Heart left ventricle (tissue), 16 donors: ENCODE measurements at regions of chr3 and their contacts with region 1.

Region 1: GRCh38 chr3:69784954-69785514 is 45.8 kb downstream of the MITF start:
- DNase-seq: peak; percentile 34 to 81 (median 77)
- ATAC-seq: peak; percentile 57 to 90 (median 82)
- H3K4me3 ChIP-seq: no peak overlapping the region
- H3K27ac ChIP-seq: peak overlapping the region in 11 of 12 donors; percentile 9 to 70 (median 46)
- H3K4me1 ChIP-seq: peaks cover 0 to 65% (median 45%) of the 10 kb centered on the region in 12 donors
- H3K27me3 ChIP-seq: no peaks in the 10 kb centered on the region
- CTCF ChIP-seq: no peak
- POLR2A ChIP-seq: no peak

Region 2: DNA sequence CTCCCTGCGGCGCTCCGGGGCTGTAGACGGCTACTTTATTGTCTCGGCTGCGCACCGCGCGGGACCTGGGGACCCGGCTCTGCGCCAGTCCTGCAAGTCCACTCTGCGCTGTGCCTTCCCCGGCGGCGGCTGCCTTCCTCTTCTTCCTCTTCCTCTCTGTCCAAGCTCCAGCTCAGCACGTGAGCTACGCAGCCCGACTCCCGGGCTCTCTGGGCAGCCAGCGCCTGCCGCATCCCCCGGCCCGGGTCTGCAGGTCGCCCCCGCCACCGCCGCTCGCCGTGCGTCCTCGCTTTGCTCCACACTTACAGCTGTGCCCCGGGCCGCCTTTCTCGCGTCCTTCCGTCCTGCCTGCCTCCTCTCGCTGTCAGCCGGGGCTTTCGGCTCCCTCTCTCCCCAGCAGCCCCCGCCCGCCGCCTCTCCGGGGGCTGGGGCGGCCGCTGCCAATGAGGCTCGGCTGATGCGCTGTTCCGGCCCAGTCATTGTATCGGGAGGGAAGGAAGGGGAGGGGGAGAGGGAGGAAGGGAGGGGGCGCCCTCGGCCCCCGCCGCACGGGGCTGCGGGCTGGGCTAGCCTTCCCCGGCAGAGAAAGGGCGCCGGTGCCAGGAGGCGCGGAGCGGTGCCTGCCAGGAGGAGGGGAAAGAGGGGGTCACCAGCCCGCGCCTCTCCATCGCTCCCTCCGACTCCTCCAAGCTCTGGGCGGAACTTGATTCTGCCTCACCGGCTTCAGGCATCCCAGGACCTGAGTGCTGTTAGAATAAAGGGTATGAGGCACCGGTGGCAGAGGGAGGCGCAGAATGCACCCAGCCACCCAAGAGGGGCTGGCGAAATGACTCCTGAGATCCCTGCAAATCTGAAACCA is 242.6 kb before region 1 on chr3:
- intact Hi-C with region 1: no loop called
- DNase-seq: peak in 4 of 5 donors; percentile 20 to 70 (median 46)
- ATAC-seq: peak; percentile 12 to 77 (median 70)
- H3K4me3 ChIP-seq: peak overlapping the region; percentile 55 to 77 (median 62)
- H3K27ac ChIP-seq: peak overlapping the region in 9 of 12 donors; percentile 3 to 70 (median 47)
- H3K4me1 ChIP-seq: peaks cover 0 to 24% (median 5%) of the 10 kb centered on the region in 12 donors
- H3K27me3 ChIP-seq: peaks cover 0 to 13% (median 0%) of the 10 kb centered on the region in 9 donors
- CTCF ChIP-seq: no peak
- POLR2A ChIP-seq: no peak

Region 3: DNA sequence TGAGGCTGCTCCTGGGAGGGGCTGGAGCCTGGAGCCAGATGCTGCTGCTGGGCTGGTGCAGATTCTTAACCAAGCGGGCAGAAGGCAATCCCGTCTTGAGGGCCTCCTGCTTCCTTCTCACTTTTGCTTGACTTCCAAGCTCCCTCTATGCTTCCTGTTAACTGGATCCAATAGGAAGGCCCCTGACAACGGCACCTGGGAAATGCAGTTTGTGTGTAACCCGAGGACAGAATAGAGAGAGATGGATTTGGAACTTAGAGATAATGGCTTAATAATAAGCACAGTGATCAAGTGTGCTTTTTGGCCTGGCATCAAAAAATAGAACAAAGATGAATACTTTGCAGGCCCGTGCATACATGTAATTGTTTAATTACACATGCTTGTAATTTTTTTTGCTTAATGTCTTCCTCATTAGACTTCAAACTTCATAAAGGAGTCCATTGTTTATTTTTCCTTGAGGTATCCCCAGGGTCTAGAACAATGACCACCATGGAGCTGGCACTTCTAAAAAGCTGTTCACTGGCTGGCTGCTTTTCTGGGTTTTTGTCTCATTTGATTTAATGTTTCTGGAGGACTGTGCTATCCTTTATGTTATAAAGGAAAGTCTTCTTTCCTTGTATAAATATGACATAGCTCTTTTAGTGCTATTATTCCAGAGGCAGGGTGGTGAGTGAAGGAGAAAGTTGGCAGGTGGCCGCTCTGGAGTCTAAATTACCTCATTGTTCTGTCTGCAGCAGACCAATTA is 109.1 kb before region 1 on chr3:
- intact Hi-C with region 1: no loop called
- DNase-seq: no peak
- ATAC-seq: no peak
- H3K4me3 ChIP-seq: no peak overlapping the region
- H3K27ac ChIP-seq: no peak overlapping the region
- H3K4me1 ChIP-seq: peaks cover 0 to 17% (median 0%) of the 10 kb centered on the region in 12 donors
- H3K27me3 ChIP-seq: no peaks in the 10 kb centered on the region
- CTCF ChIP-seq: no peak
- POLR2A ChIP-seq: no peak

Region 4: GRCh38 chr3:69739204-69740102 is 45.6 kb before region 1 on chr3 and contains the start of gene MITF:
- intact Hi-C with region 1: loop called in 7 of 10 experiments (anchors 2 to 10 kb)
- DNase-seq: peak; percentile 94 to 97 (median 95)
- ATAC-seq: peak; percentile 95 to 98 (median 98)
- H3K4me3 ChIP-seq: peak within 1 kb of the TSS; percentile 67 to 98 (median 84)
- H3K27ac ChIP-seq: peak within 1 kb of the TSS; percentile 79 to 94 (median 92)
- H3K4me1 ChIP-seq: peaks cover 0 to 51% (median 26%) of the 10 kb centered on the region in 12 donors
- H3K27me3 ChIP-seq: no peaks in the 10 kb centered on the region
- CTCF ChIP-seq: peak in 1 of 12 donors; percentile 6
- POLR2A ChIP-seq: peak; percentile 71 to 91
- total RNA-seq, gene MITF: 61.4 to 114 (median 86.9) TPM

Region 5: DNA sequence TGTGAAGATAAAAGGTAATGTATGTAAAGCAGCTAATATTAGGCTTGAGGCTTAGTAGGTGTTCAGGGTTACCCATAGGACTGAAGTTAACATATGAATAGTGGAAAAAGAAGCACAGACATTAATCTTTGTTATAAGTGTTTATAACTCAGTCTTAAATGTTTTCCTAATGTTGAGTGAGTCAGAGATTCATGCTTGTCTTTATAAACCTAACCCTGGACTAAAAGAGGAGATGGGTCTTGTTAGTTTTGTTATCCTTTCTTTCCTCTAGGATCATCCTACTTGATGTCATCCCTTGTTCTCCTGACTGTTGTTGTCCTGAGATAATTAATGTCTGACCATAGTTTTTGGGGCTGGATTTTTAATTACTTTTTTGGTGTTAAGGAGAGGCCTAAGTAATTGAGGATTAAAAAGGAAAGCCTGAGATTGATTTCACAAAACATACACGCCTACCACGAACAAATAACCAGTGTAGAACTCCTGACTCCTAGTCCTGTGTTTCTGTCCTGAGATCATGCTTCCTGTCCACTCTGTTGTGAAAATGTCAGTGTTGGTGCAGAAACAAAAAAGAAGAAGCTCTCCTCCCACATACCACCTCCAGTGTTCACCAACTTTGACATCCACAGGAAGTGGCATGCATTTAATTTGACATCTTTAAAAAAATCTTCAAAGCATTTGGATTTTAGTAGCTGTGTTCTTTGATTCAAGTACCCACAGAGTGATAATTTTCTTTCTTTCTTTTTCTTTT is 37.3 kb before region 1 on chr3:
- intact Hi-C with region 1: loop called in 5 of 10 experiments (anchors 5 kb)
- DNase-seq: no peak
- ATAC-seq: no peak
- H3K4me3 ChIP-seq: no peak overlapping the region
- H3K27ac ChIP-seq: peak overlapping the region in 9 of 12 donors; percentile 3 to 93 (median 43)
- H3K4me1 ChIP-seq: peaks cover 0 to 89% (median 78%) of the 10 kb centered on the region in 12 donors
- H3K27me3 ChIP-seq: no peaks in the 10 kb centered on the region
- CTCF ChIP-seq: no peak
- POLR2A ChIP-seq: no peak

Region 6: DNA sequence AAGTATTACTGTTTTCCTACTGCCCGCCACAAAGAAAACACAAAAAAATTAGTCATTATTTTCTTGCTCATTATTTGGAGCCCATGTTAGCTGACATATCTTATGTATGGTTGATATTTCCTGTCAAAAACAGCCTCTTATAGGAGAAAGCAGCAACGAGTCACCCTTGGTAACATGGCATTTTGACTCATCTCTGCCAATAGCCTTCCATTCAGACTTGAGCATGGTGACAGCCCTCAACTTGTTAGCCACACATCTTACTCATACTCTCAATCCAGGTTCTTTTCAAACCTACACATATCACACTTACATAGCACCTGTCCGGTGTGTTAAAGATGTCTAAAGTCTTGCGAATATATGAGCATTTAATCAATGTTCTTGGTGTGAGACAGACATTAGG is 105.0 kb after region 1 on chr3:
- intact Hi-C with region 1: no loop called
- DNase-seq: no peak
- ATAC-seq: peak in 1 of 4 donors; percentile 24
- H3K4me3 ChIP-seq: no peak overlapping the region
- H3K27ac ChIP-seq: no peak overlapping the region
- H3K4me1 ChIP-seq: peaks cover 0 to 36% (median 8%) of the 10 kb centered on the region in 12 donors
- H3K27me3 ChIP-seq: no peaks in the 10 kb centered on the region
- CTCF ChIP-seq: no peak
- POLR2A ChIP-seq: no peak